ENCODE measurements at regions of chr4 and their contacts with region 1.

Region 1: DNA sequence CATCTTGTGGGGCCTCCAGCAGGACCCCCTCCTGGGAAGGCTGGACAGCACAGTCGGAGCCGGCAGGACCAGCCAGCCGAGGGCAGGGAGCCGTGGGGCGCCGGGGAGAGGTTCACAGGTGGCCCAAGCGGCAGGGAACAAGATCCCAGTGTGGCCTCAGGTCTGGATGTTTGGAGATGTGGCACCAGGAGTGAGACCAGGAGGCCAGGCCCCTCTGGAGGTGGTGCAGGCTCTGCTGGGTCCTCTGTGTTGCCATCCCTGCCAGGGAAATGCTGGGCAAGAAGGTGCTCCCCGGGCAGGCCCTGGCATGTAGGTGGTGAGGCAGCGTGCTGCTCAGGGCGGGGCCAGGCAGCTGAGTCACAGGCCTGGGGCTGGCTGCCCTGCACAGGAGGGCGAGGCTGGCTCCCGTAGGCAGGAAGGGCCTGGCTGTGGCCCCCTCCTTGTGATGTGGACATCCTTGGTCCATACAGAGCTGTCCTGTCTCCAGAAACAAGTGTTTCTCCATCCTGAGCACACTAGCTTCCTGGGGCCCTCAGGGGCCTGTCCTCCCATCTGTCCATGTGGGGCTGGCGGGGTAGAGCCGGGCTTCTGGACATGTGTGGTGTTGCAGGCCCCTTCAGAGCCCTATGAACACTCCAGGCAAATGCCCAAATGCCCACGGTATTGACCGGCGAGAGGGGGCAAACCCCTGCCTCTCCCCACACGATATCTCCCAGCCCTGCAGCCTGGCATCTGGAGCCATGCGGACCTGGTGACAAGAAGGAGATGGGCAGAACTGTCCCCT is 4.8 kb upstream of the HGFAC start:
- DNase-seq: peak; percentile 79
- ATAC-seq: peak; percentile 75
- H3K4me3 ChIP-seq: no peak overlapping the region
- H3K27ac ChIP-seq: no peak overlapping the region
- H3K4me1 ChIP-seq: no peaks in the 10 kb centered on the region
- H3K27me3 ChIP-seq: no peaks in the 10 kb centered on the region
- CTCF ChIP-seq: no peak

Region 2: GRCh38 chr4:3193531-3194203 is 243.3 kb before region 1 on chr4:
- intact Hi-C with region 1: loop called (anchors 10 kb)
- DNase-seq: no peak
- ATAC-seq: no peak
- H3K4me3 ChIP-seq: no peak overlapping the region
- H3K27ac ChIP-seq: no peak overlapping the region
- H3K4me1 ChIP-seq: no peaks in the 10 kb centered on the region
- H3K27me3 ChIP-seq: no peaks in the 10 kb centered on the region
- CTCF ChIP-seq: peak; percentile 39

Measured in upper lobe of right lung (tissue), 1 donor.